ENCODE measurements at regions of chr5 and their contacts with region 1.

Region 1: GRCh38 chr5:149442563-149443182 is 63.6 kb upstream of the IL17B start:
- DNase-seq: peak; percentile 91
- ATAC-seq: peak; percentile 85

Region 2: GRCh38 chr5:149298842-149299404 is 143.8 kb before region 1 on chr5:
- intact Hi-C with region 1: no loop called
- DNase-seq: no peak
- ATAC-seq: peak; percentile 29

Region 3: DNA sequence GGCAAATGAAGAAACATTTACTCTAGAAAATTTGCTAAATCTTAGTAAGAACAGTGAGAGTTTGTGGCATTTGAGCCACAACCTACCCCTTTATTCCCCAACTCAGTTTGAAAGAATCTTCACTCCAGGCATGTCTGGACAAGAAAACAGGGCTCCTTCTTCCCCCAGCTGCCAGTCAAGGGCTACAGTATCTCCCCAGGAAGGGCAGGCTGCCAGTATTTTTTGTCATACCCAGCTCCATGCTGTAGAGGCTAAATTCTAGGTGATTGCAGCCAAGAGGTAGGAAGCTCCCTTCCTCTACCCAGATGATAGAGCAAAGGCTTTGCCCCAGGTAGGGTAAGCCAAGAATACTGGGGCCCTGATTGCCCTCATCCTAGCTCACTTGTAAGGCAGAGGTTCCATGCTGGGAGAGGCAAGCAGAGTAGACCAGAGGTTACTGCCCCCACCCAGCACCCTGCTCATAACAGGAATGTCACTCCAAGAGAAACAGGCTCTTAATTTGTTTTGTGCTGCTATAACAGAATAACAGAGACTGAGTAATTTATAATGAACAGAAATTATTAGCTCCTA is 117.4 kb before region 1 on chr5:
- intact Hi-C with region 1: no loop called
- DNase-seq: no peak
- ATAC-seq: peak; percentile 46

Region 4: DNA sequence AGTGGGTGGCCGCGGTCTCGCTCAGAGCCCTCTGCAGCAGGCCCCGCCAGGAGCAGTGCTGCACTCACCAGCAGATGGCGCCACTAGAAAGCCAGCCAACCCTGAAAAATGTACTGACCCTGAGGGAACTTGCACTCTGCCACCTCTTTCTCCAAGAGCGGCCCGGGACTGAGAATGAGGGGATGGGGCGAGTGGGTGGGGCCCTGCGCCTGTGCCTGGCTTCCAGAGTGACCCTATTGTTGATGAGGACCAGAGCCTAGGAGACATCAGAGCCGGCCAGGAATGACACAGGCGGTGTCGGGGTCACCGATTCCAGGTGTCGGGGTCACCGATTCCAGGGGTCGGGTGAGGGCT is 60.7 kb before region 1 on chr5:
- intact Hi-C with region 1: no loop called
- DNase-seq: peak; percentile 88
- ATAC-seq: peak; percentile 78

Region 5: DNA sequence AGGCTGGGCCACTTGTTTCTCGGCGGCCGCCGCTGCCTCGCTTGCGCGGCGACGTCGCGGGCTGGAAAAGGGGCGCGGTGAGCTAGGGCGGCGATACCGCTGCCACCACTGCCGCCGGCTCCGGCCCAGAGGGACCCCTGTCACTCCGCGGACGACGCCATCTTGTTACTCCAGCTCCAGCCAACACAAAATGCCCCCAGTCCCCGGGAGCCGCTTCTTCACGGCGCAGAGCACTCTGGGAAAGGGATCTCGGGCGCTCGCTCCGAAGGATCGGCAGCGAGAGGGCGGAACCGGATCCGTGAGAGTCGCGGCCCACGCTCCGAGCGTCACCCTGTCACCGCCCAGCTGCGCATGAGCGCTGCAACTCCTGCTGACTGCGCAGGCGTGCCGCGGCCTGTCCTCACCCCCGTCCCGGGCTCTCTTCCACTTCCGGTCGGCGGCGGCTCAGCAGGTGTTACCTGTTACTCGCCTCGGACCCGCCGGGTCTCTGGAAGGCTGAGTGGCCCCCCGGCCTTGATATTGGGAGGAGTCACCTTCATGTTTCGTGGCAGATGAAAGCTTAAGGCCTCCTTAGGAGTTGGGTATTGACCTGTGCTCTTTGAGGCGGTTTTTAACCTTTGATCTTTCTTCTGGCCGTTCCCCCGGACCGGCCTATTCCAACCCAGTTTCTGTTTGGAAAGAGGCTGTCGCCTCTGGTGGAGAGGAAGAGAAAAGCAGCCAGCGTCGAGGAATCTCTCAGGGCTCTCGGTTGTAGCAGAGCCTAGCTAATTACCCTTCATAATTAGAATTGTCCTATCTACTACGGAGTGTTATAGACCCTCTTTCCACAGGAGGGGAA is 108.7 kb after region 1 on chr5 and contains the start of gene CSNK1A1:
- intact Hi-C with region 1: loop called (anchors 5 kb)
- DNase-seq: peak; percentile 99
- ATAC-seq: peak; percentile 96
- total RNA-seq, gene CSNK1A1: 214 TPM